Heart right ventricle (tissue), 16 donors: ENCODE measurements at regions of chr15 and their contacts with region 1.

Region 1: GRCh38 chr15:74172701-74173379 is 670 bp upstream of the ISLR start:
- DNase-seq: peak; percentile 82 to 83
- ATAC-seq: peak; percentile 67 to 89 (median 78)
- H3K4me3 ChIP-seq: peak overlapping the region in 5 of 10 donors; percentile 47 to 54 (median 51)
- H3K27ac ChIP-seq: peak overlapping the region; percentile 68 to 93 (median 83)
- H3K4me1 ChIP-seq: peaks cover 19 to 93% (median 51%) of the 10 kb centered on the region in 9 donors
- H3K27me3 ChIP-seq: no peaks in the 10 kb centered on the region
- CTCF ChIP-seq: peak in 3 of 9 donors; percentile 4 to 24 (median 16)

Region 2: DNA sequence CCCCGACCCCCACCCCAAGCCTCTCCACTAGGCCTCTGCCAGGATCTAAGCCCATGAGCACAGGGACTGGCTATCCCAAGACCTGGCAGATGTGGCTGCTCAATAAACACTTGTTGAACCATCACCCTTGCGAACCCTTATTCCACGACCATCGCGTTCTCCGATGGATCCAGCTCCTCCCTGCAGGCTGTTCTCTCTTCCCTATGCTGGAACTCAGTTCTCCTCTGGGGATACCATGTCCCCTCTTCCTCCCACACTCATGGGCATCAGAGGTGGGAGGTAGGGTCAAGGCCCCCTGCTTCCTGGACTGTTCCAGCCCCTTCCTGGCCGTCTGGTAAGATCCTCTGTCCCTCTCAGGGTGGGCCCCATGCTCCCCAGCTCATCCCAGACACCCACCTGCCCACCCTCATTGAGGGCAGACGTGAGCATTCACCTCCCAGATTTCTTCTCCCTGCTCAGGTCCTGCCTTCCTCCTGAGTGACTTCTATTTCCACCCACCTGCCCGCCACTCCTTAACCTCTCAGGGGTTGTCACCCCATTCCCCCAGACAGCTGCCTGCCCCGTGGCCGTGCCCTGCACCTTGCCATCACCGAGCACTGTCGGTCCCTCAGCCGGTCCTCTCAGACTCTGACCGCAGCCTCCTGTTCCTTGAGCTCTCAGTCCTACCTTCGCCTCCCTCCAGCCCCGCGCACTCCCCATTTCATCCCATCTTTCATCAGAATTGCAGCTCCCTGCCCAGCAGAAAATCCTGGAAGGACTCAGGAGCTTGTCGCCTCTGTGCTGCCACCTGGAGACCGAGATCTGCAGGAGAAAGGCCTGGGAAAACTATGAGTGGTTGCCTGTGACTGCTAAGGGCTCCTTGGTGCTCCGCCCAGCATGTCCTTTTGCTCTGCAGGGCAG is 136.3 kb before region 1 on chr15:
- intact Hi-C with region 1: no loop called
- DNase-seq: peak; percentile 39 to 60
- ATAC-seq: peak; percentile 7 to 32 (median 24)
- H3K4me3 ChIP-seq: no peak overlapping the region
- H3K27ac ChIP-seq: peak overlapping the region in 2 of 10 donors; percentile 11 to 16
- H3K4me1 ChIP-seq: peaks cover 9 to 61% (median 42%) of the 10 kb centered on the region in 9 donors
- H3K27me3 ChIP-seq: no peaks in the 10 kb centered on the region
- CTCF ChIP-seq: peak in 8 of 9 donors; percentile 23 to 68 (median 56)

Region 3: DNA sequence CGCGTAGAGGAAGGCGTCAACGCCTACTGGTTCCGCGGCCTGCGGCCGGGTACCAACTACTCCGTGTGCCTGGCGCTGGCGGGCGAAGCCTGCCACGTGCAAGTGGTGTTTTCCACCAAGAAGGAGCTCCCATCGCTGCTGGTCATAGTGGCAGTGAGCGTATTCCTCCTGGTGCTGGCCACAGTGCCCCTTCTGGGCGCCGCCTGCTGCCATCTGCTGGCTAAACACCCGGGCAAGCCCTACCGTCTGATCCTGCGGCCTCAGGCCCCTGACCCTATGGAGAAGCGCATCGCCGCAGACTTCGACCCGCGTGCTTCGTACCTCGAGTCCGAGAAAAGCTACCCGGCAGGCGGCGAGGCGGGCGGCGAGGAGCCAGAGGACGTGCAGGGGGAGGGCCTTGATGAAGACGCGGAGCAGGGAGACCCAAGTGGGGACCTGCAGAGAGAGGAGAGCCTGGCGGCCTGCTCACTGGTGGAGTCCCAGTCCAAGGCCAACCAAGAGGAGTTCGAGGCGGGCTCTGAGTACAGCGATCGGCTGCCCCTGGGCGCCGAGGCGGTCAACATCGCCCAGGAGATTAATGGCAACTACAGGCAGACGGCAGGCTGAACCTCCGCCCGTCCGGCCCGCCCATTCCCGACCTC is 38.3 kb before region 1 on chr15:
- intact Hi-C with region 1: loop called in 3 of 10 experiments (anchors 2 to 5 kb)
- DNase-seq: peak in 1 of 2 donors; percentile 66
- ATAC-seq: peak in 1 of 8 donors; percentile 33
- H3K4me3 ChIP-seq: no peak overlapping the region
- H3K27ac ChIP-seq: peak overlapping the region in 1 of 10 donors; percentile 87
- H3K4me1 ChIP-seq: peaks cover 13 to 70% (median 55%) of the 10 kb centered on the region in 9 donors
- H3K27me3 ChIP-seq: peaks cover 0 to 92% (median 61%) of the 10 kb centered on the region in 7 donors
- CTCF ChIP-seq: peak in 8 of 9 donors; percentile 31 to 61 (median 50)